Left lung (tissue), 14 donors: ENCODE measurements at regions of chr2 and their contacts with region 1.

Region 1: DNA sequence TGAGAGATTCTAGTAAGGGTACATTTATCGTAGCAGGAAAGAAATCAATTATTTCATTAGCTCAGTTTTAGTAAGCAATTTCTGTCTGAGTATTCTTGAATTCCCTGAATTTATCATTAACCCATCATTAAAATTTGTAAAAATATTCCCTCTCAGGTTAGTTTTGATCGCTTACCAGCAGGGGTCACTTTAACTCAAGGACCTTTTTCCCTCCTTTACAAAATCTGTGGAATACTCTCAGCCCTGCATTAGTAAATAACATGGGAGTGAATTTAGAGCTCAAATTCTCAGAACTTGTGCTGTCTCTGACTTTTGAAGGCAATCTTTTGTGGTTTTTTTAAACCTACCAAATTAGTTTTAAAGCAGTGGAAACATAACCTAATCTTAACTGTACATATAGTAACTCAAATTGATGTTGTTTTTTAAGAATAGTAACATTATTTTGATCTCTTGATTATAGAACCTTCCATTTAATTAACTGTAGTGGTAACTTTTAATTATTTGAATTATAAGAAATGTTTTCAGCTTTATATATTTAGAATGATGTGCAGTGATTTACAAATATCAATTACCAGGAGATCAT is 97.2 kb downstream of the AGPS start:
- DNase-seq: peak in 2 of 4 donors; percentile 31 to 61
- ATAC-seq: peak; percentile 61
- H3K4me3 ChIP-seq: no peak overlapping the region
- H3K27ac ChIP-seq: no peak overlapping the region
- H3K4me1 ChIP-seq: no peaks in the 10 kb centered on the region
- H3K27me3 ChIP-seq: no peaks in the 10 kb centered on the region
- CTCF ChIP-seq: peak in 1 of 2 donors; percentile 51

Region 2: DNA sequence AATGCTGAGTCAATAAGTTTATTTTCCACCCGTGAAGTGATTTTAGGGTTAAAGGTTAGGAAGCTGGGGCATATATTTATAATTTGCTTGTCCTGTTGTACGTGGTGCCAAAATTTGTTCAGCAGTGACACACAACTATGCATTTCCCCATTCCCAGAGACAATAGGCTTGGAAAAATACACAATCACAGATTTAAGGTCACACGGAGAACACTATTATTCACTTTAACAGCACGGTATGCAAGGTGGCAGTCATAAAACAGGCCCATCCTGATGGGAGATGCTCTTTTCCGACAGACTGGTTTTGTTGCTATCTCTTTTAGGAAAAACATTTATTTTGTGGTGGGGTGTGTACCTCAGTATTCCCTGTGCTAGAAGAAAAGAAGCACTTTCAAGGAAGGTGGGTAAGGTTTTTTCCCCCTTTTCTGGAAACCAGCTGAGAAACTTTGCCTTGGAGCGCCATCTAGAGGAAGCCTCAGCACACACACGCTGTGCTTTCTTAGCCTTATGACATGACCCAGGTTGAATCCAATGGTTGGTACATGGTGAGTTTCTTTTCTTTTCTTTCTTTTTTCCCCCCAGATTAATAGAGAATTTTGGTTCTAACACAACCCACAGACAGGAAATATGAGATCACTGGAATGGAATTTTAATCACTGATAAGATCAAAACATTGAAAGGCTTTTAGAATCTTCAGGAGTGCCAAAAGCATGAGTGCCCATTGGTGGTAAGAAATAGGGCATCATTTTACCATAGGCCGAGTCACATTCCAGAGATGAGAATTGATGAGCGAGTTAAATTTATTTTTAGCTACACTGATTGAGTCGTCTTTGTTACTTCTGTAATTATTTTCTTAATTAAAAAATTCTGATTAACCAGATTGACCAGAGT is 234.8 kb after region 1 on chr2:
- intact Hi-C with region 1: loop called in 1 of 2 experiments (anchors 10 kb)
- DNase-seq: peak in 2 of 4 donors; percentile 56 to 65
- ATAC-seq: peak; percentile 88
- H3K4me3 ChIP-seq: no peak overlapping the region
- H3K27ac ChIP-seq: no peak overlapping the region
- H3K4me1 ChIP-seq: no peaks in the 10 kb centered on the region
- H3K27me3 ChIP-seq: no peaks in the 10 kb centered on the region
- CTCF ChIP-seq: peak; percentile 78 to 82